MCF 10A (cell line): ENCODE measurements at regions of chr9 and their contacts with region 1.

Region 1: DNA sequence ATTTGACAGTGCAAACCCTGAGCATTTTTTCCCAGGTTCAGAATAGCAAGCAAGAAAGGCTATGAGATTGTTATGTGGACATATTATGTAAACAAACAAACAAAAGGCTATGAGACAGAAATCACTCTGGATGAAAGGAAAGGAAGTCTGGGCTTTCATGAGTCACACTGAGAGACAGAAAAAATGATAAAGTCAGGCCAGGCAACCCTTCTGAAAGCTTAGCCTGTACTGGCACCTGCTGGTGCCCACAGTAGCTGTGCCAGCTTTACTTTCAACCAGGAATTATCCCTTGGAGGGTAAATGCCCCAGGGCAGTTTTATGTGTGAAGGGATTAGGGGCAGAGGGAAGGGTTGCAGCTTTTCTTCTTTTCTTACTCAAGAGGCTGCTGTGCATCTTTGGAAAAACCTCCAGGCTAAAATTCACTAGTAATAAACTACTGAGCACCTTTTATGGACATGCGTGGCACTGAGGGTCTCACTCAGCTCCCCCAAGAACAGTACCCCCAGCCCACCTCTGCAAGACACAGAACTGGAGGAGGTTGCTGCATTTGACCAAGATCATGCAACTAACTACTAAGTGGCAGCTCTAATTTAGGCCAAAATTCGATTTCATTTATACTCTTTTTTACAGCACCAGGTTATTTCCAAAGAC is 41.7 kb downstream of the ACTL7B start:
- DNase-seq: peak; percentile 81
- H3K4me3 Mint-ChIP-seq: no peak overlapping the region
- H3K27ac Mint-ChIP-seq: peak overlapping the region; percentile 56
- H3K4me1 Mint-ChIP-seq: peaks cover 9% of the 10 kb centered on the region
- H3K27me3 Mint-ChIP-seq: no peaks in the 10 kb centered on the region
- CTCF ChIP-seq: peak; percentile 92

Region 2: DNA sequence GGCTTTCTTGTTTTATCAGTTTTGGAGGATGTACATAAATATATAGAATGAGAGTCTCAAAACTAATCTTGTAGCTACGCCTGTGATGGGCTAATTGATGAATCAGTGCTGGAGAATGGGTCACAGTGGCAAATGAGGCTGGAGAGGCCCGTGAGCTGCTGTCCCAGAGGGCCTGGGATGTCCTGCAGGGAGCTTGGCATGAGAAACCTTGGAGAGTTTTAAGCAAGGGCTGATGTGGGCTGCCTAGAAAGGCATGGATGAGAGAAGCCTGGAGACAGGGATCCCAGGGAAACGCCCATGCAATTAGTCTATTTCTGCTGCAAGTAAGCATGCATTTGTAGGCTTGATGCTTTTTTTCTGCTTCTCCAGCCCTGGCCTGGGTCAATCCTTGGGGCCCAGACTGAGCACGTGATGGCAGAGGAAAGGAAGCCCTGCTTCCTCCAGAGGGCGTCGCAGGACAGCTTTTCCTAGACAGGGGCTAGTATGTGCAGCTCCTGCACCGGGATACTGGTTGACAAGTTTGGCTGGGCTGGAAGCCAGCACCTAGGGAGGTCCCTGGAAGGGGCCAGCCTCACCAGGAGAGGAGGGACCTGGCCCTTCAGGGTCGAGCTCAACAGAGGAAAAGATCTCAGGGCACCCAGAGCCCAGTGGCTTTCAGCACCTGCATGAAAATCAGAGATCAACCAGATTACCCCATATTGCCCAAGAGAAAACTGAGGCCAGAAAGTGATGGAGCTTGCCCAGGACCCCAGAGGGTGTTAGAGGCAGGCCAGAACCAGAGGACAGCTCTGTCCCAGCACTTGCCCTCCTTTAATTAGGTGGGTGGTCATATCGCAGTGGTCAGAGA is 1391.9 kb before region 1 on chr9:
- CTCF ChIA-PET with region 1: interaction called, 10 read pairs
- POLR2A ChIA-PET with region 1: no interaction called
- intact Hi-C with region 1: loop called (anchors 1 kb)
- DNase-seq: peak; percentile 87
- H3K4me3 Mint-ChIP-seq: no peak overlapping the region
- H3K27ac Mint-ChIP-seq: no peak overlapping the region
- H3K4me1 Mint-ChIP-seq: peaks cover 11% of the 10 kb centered on the region
- H3K27me3 Mint-ChIP-seq: no peaks in the 10 kb centered on the region
- CTCF ChIP-seq: peak; percentile 56

Region 3: DNA sequence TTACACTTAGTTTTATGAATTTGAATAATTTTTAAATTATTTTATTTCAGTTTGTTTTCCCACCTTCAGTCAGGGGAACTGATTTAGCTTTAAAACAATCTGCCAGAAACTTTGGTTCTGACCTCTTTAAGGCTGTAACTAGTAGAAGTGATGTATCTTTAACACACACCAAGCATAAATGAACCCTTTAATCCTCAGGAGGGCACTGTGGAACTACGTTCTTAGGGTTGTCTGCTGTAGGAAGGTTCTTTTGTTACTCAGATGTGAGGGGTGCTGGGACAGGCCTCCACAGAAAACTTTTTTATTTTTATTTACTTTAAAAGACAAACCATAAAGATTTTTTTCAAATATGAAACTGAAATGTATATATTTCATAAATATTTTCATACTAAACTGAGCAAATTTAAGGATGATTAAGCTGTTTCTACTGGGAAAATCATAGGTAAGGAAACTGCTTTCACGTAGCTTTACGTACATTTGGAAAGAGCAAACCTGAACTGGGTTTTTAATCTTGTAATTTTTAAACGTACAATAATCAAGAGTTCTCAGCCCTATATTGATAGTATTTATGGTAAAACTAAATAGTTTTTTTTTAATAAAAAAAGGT is 1329.9 kb before region 1 on chr9:
- CTCF ChIA-PET with region 1: interaction called, 5 read pairs
- POLR2A ChIA-PET with region 1: interaction called, 3 read pairs
- intact Hi-C with region 1: loop called (anchors 5 kb)
- DNase-seq: peak; percentile 81
- H3K4me3 Mint-ChIP-seq: no peak overlapping the region
- H3K27ac Mint-ChIP-seq: no peak overlapping the region
- H3K4me1 Mint-ChIP-seq: peaks cover 31% of the 10 kb centered on the region
- H3K27me3 Mint-ChIP-seq: no peaks in the 10 kb centered on the region
- CTCF ChIP-seq: peak; percentile 55

Region 4: GRCh38 chr9:108579757-108580439 is 234.2 kb before region 1 on chr9:
- CTCF ChIA-PET with region 1: interaction called, 4 read pairs
- POLR2A ChIA-PET with region 1: no interaction called
- intact Hi-C with region 1: loop called (anchors 5 kb)
- DNase-seq: peak; percentile 96
- H3K4me3 Mint-ChIP-seq: no peak overlapping the region
- H3K27ac Mint-ChIP-seq: no peak overlapping the region
- H3K4me1 Mint-ChIP-seq: peaks cover 30% of the 10 kb centered on the region
- H3K27me3 Mint-ChIP-seq: peaks cover 52% of the 10 kb centered on the region
- CTCF ChIP-seq: no peak

Region 5: GRCh38 chr9:108634204-108634603 is 179.9 kb before region 1 on chr9:
- CTCF ChIA-PET with region 1: no interaction called
- POLR2A ChIA-PET with region 1: no interaction called
- intact Hi-C with region 1: no loop called
- DNase-seq: peak; percentile 89
- H3K4me3 Mint-ChIP-seq: peak overlapping the region; percentile 59
- H3K27ac Mint-ChIP-seq: peak overlapping the region; percentile 98
- H3K4me1 Mint-ChIP-seq: peaks cover 20% of the 10 kb centered on the region
- H3K27me3 Mint-ChIP-seq: no peaks in the 10 kb centered on the region
- CTCF ChIP-seq: no peak

Region 6: DNA sequence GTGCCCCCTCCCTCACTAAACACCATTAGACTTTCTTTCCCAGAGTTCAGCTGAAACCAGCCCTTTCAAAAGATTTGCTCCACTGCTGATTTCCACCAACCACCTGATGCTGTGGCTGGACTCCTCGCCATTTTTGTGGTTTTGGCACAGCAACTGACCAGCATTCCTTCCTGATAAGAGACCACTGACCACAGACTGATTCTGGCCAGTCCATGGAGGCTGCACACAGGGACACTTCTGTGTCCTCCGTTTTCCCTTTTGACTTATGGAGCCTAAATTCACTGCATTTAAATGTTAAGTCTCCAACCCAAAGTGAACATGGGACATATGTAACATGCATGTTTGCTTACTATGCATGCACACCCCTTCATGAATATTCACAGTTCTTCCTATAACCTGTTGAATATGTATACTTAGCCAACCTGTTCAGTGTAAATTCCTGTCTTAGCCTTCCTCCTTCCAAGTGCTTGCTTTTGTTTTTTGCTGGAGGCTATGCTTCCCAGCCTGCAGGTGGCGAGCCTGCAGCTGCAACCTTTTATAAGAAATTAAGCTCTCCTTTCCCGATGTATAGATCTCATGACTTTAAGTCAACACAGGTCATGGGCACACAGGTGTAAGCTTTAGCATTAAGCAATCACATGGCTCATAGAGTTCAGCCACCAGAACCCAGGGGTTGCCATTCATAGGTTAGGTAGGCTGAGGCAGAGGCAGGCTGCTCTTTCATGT is 37.0 kb before region 1 on chr9:
- CTCF ChIA-PET with region 1: interaction called, 26 read pairs
- POLR2A ChIA-PET with region 1: interaction called, 9 read pairs
- intact Hi-C with region 1: loop called (anchors 5 kb)
- DNase-seq: peak; percentile 48
- H3K4me3 Mint-ChIP-seq: no peak overlapping the region
- H3K27ac Mint-ChIP-seq: no peak overlapping the region
- H3K4me1 Mint-ChIP-seq: peaks cover 14% of the 10 kb centered on the region
- H3K27me3 Mint-ChIP-seq: no peaks in the 10 kb centered on the region
- CTCF ChIP-seq: no peak